CD4-positive, alpha-beta memory T cell (primary cell): ENCODE measurements at regions of chr1 and their contacts with region 1.

Region 1: DNA sequence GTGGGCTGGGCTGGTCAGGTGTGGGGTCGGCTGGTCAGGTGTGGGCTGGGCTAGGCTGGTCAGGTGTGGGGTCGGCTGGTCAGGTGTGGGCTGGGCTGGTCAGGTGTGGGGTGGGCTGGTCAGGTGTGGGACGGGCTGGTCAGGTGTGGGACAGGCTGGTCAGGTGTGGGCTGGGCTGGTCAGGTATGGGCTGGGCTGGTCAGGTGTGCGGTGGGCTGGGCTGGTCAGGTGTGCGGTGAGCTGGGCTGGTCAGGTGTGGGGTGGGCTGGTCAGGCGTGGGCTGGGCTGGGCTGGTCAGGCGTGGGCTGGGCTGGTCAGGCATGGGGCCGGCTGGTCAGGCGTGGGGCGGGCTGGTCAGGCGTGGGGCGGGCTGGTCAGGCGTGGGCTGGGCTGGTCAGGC is 6.3 kb upstream of the FNDC10 start:
- DNase-seq: peak in 1 of 5 donors; percentile 33
- H3K4me3 ChIP-seq: no peak overlapping the region
- H3K4me3 Mint-ChIP-seq: no peak overlapping the region
- H3K27ac ChIP-seq: no peak overlapping the region
- H3K27ac Mint-ChIP-seq: no peak overlapping the region
- H3K4me1 ChIP-seq: peaks cover 13% of the 10 kb centered on the region
- H3K4me1 Mint-ChIP-seq: peaks cover 8 to 25% (median 13%) of the 10 kb centered on the region in 4 donors
- H3K27me3 ChIP-seq: no peaks in the 10 kb centered on the region
- H3K27me3 Mint-ChIP-seq: no peaks in the 10 kb centered on the region

Region 2: DNA sequence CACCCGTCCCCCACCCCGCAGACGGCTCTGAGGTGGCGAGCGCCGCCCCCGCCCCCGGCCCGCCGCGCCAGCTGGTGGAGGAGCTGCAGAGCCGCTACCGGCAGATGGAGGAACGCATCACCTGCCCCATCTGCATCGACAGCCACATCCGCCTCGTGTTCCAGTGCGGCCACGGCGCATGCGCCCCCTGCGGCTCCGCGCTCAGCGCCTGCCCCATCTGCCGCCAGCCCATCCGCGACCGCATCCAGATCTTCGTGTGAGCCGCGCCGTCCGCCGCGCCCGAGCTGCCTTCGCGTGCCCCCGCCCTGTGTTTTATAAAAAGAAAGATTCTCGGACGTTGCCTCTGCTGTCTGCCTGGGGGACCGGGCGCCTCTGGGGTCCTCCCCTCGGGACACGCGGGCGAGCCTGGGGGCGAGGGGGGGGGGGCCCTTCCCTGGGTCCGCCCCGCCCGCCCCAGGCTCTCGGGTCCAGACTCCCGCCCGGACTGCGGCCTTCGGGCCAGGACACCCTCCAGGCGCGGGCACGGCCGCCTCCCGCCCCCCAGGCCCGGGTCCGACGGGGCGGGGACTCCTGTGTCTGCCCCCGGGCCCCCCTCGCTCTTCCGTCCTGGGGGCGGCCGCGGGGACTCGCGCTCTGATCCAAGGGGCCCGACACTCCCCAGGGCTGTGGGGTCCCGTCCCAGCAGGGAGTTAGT is 24.2 kb after region 1 on chr1:
- CTCF ChIA-PET with region 1: no interaction called
- POLR2A ChIA-PET with region 1: interaction called, 18 read pairs
- intact Hi-C with region 1: no loop called
- DNase-seq: peak; percentile 96 to 98 (median 97)
- H3K4me3 ChIP-seq: peak overlapping the region in 1 of 2 donors; percentile 48
- H3K4me3 Mint-ChIP-seq: peak overlapping the region; percentile 66 to 95 (median 91)
- H3K27ac ChIP-seq: peak overlapping the region; percentile 38
- H3K27ac Mint-ChIP-seq: peak overlapping the region; percentile 93 to 97 (median 96)
- H3K4me1 ChIP-seq: peaks cover 19% of the 10 kb centered on the region
- H3K4me1 Mint-ChIP-seq: peaks cover 3 to 9% (median 6%) of the 10 kb centered on the region in 4 donors
- H3K27me3 ChIP-seq: no peaks in the 10 kb centered on the region
- H3K27me3 Mint-ChIP-seq: peaks cover 2 to 4% of the 10 kb centered on the region in 2 donors